WTC11 (cell line): ENCODE measurements at regions of chr11 and their contacts with region 1.

Region 1: GRCh38 chr11:71372693-71373657 is 75.2 kb downstream of the DHCR7 start:
- DNase-seq: no peak
- ATAC-seq: peak; percentile 57
- H3K4me3 Mint-ChIP-seq: no peak overlapping the region
- H3K27ac Mint-ChIP-seq: 0 out of 2 replicates have a peak overlapping the region, but pooled peaks have one; percentile 42
- H3K4me1 Mint-ChIP-seq: peaks cover 23% of the 10 kb centered on the region
- H3K27me3 Mint-ChIP-seq: peaks cover 33% of the 10 kb centered on the region
- CTCF ChIP-seq: no peak

Region 2: GRCh38 chr11:71302911-71303310 is 70.1 kb before region 1 on chr11:
- CTCF ChIA-PET with region 1: no interaction called
- POLR2A ChIA-PET with region 1: no interaction called
- DNase-seq: no peak
- ATAC-seq: peak; percentile 64
- H3K4me3 Mint-ChIP-seq: no peak overlapping the region
- H3K27ac Mint-ChIP-seq: no peak overlapping the region
- H3K4me1 Mint-ChIP-seq: peaks cover 4% of the 10 kb centered on the region; the same call in 1 of the 2 replicates
- H3K27me3 Mint-ChIP-seq: peaks cover 17% of the 10 kb centered on the region; the same call in 1 of the 2 replicates
- CTCF ChIP-seq: no peak

Region 3: GRCh38 chr11:71420455-71421241 is 47.7 kb after region 1 on chr11:
- CTCF ChIA-PET with region 1: interaction called, 20 read pairs
- POLR2A ChIA-PET with region 1: no interaction called
- DNase-seq: peak; percentile 74
- ATAC-seq: peak; percentile 83
- H3K4me3 Mint-ChIP-seq: no peak overlapping the region
- H3K27ac Mint-ChIP-seq: no peak overlapping the region
- H3K4me1 Mint-ChIP-seq: no peaks in the 10 kb centered on the region
- H3K27me3 Mint-ChIP-seq: peaks cover 3% of the 10 kb centered on the region; the same call in 1 of the 2 replicates
- CTCF ChIP-seq: peak; percentile 89